ENCODE measurements at regions of chr5 and their contacts with region 1.

Region 1: GRCh38 chr5:149544028-149544420 is 7.2 kb downstream of the CSNK1A1 start:
- DNase-seq: no peak
- ATAC-seq: peak; percentile 47
- H3K4me3 ChIP-seq: no peak overlapping the region
- H3K27ac ChIP-seq: no peak overlapping the region
- H3K4me1 ChIP-seq: no peaks in the 10 kb centered on the region
- H3K27me3 ChIP-seq: no peaks in the 10 kb centered on the region

Region 2: GRCh38 chr5:149442563-149443182 is 101.4 kb before region 1 on chr5:
- intact Hi-C with region 1: no loop called
- DNase-seq: peak; percentile 83 to 96
- ATAC-seq: peak; percentile 85
- H3K4me3 ChIP-seq: no peak overlapping the region
- H3K27ac ChIP-seq: peak overlapping the region in 1 of 2 donors; percentile 15
- H3K4me1 ChIP-seq: no peaks in the 10 kb centered on the region
- H3K27me3 ChIP-seq: no peaks in the 10 kb centered on the region

Region 3: DNA sequence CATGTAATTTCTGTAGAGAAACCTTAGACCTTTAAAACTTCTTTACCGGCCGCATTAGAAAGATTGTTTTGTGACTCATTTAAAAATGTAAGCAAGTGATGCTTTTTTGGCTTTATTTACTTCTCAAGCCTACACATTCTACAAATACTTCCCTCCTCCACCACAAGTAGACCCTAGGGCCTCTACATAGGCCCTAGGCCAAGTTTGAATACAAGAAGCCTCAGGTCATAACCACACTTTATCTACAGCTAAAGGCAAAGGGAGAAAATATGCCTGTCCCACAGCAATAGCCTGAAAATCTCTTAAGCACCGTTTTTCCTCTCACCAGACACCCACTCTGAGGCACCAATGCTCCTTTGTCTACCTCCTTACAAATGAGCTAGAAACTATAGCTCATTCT is 46.7 kb before region 1 on chr5:
- intact Hi-C with region 1: loop called (anchors 5 kb)
- DNase-seq: no peak
- ATAC-seq: no peak
- H3K4me3 ChIP-seq: no peak overlapping the region
- H3K27ac ChIP-seq: peak overlapping the region; percentile 57 to 84
- H3K4me1 ChIP-seq: peaks cover 2 to 6% of the 10 kb centered on the region in 2 donors
- H3K27me3 ChIP-seq: no peaks in the 10 kb centered on the region

Region 4: DNA sequence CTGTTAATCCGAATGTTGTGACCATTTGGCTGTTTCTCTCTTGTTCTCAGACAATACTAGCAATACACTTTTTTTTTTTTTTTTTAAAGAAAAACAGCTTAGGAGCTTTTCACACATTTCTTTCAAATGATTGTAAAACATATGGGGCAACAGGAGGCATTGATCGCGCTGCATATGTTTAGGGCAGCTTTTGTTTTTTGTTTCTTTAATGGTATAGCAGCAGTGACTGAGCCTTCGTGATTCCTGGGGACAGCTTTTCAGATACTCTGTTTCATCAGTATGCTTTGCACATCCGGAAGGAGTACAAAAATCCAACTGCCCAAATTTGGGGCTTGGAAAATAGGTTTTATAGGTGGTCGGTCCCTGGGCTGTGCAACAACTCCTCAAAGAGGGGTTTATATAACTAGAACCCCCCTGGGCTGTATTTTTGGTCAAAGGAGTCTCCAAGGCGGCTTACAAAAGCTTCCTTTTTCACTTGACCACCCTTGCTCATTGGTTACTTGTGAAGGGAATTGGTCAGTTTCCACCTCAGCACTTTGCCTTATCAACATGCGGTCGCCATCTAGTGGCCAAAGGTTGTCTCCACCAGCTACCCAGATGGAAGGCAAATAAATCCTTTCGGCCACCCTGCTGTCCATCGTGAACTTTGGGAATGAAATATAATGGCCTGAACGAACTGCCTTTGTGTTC is 308.8 kb after region 1 on chr5:
- intact Hi-C with region 1: no loop called
- DNase-seq: peak; percentile 81 to 87
- ATAC-seq: peak; percentile 71
- H3K4me3 ChIP-seq: no peak overlapping the region
- H3K27ac ChIP-seq: no peak overlapping the region
- H3K4me1 ChIP-seq: no peaks in the 10 kb centered on the region
- H3K27me3 ChIP-seq: no peaks in the 10 kb centered on the region

Region 5: GRCh38 chr5:150357326-150358260 is 813.6 kb after region 1 on chr5 and contains the start of gene TCOF1:
- intact Hi-C with region 1: no loop called
- DNase-seq: peak; percentile 98 to 99
- ATAC-seq: peak; percentile 98
- H3K4me3 ChIP-seq: peak within 1 kb of the TSS; percentile 84 to 95
- H3K27ac ChIP-seq: no peak within 1 kb of the TSS
- H3K4me1 ChIP-seq: no peaks in the 10 kb centered on the region
- H3K27me3 ChIP-seq: no peaks in the 10 kb centered on the region
- total RNA-seq, gene TCOF1: 26.2 to 27.8 TPM